Upper lobe of right lung (tissue), 1 donor: ENCODE measurements at regions of chr9 and their contacts with region 1.

Region 1: DNA sequence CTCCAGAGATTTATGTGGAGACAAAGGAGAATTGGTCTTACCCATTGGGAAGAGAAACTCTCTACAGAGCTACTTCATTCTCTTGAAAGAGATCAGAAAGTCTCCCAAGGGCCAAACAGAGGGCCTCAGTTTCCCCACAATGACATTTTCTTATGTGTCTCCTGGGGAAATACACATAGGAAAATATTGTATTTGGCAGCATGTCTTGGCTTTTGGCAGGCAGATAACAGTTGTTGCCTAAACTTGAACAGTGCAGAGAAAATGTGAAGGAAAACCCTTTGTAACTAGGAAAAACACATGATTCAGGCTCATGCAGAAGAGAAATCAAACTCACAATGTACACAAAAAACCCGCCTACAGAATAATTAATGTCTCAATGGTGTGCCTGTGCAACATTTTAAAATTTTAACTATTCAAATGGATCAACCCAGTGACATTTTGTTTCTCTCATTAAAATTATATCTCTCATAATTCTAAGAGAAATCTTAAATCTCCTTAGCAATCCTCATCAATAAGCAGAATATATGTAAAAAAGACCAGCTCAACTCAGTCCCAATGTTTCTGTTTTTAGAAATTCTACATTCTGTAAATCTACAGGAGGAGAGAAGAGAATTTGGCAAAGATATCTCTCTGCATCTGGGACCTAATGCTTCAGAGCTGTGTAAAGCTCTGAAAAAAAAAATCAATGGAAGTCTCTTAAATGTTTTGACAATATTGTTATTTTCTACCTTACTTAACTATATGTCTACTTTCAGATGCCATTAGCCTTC is 205.1 kb downstream of the ADAMTSL1 start:
- DNase-seq: no peak
- ATAC-seq: no peak
- H3K4me3 ChIP-seq: no peak overlapping the region
- H3K27ac ChIP-seq: no peak overlapping the region
- H3K4me1 ChIP-seq: no peaks in the 10 kb centered on the region
- H3K27me3 ChIP-seq: no peaks in the 10 kb centered on the region
- CTCF ChIP-seq: no peak

Region 2: GRCh38 chr9:18520416-18521047 is 158.5 kb before region 1 on chr9:
- intact Hi-C with region 1: no loop called
- DNase-seq: no peak
- ATAC-seq: no peak
- H3K4me3 ChIP-seq: no peak overlapping the region
- H3K27ac ChIP-seq: no peak overlapping the region
- H3K4me1 ChIP-seq: no peaks in the 10 kb centered on the region
- H3K27me3 ChIP-seq: no peaks in the 10 kb centered on the region
- CTCF ChIP-seq: no peak

Region 3: GRCh38 chr9:18707061-18707461 is 28.1 kb after region 1 on chr9:
- intact Hi-C with region 1: no loop called
- DNase-seq: no peak
- ATAC-seq: peak; percentile 21
- H3K4me3 ChIP-seq: no peak overlapping the region
- H3K27ac ChIP-seq: no peak overlapping the region
- H3K4me1 ChIP-seq: peaks cover 11% of the 10 kb centered on the region
- H3K27me3 ChIP-seq: no peaks in the 10 kb centered on the region
- CTCF ChIP-seq: no peak

Region 4: GRCh38 chr9:18756712-18757125 is 77.7 kb after region 1 on chr9:
- intact Hi-C with region 1: loop called (anchors 10 kb)
- DNase-seq: no peak
- ATAC-seq: no peak
- H3K4me3 ChIP-seq: no peak overlapping the region
- H3K27ac ChIP-seq: no peak overlapping the region
- H3K4me1 ChIP-seq: no peaks in the 10 kb centered on the region
- H3K27me3 ChIP-seq: no peaks in the 10 kb centered on the region
- CTCF ChIP-seq: no peak

Region 5: GRCh38 chr9:19689328-19690101 is 1010.5 kb after region 1 on chr9:
- intact Hi-C with region 1: no loop called
- DNase-seq: no peak
- ATAC-seq: no peak
- H3K4me3 ChIP-seq: no peak overlapping the region
- H3K27ac ChIP-seq: no peak overlapping the region
- H3K4me1 ChIP-seq: no peaks in the 10 kb centered on the region
- H3K27me3 ChIP-seq: no peaks in the 10 kb centered on the region
- CTCF ChIP-seq: no peak